Caco-2 (cell line): ENCODE measurements at regions of chr6 and their contacts with region 1.

Region 1: GRCh38 chr6:34986845-34987246 is 97.8 kb downstream of the ANKS1A start:
- DNase-seq: peak; percentile 56 to 72
- H3K4me3 ChIP-seq: no peak overlapping the region
- H3K4me3 Mint-ChIP-seq: no peak overlapping the region
- H3K27ac Mint-ChIP-seq: no peak overlapping the region
- H3K4me1 ChIP-seq: 0 out of 2 replicates have a peak, but pooled peaks cover 5% of the 10 kb centered on the region
- H3K4me1 Mint-ChIP-seq: peaks cover 6% of the 10 kb centered on the region
- H3K27me3 ChIP-seq: no peaks in the 10 kb centered on the region
- H3K27me3 Mint-ChIP-seq: no peaks in the 10 kb centered on the region
- CTCF ChIP-seq: peak; percentile 72 to 81

Region 2: GRCh38 chr6:34953061-34954025 is 33.5 kb before region 1 on chr6:
- CTCF ChIA-PET with region 1: no interaction called
- POLR2A ChIA-PET with region 1: no interaction called
- intact Hi-C with region 1: loop called (anchors 1 kb)
- DNase-seq: peak; percentile 43 to 67
- H3K4me3 ChIP-seq: no peak overlapping the region
- H3K4me3 Mint-ChIP-seq: no peak overlapping the region
- H3K27ac Mint-ChIP-seq: peak overlapping the region; percentile 93
- H3K4me1 ChIP-seq: peaks cover 36% of the 10 kb centered on the region
- H3K4me1 Mint-ChIP-seq: peaks cover 28% of the 10 kb centered on the region
- H3K27me3 ChIP-seq: no peaks in the 10 kb centered on the region
- H3K27me3 Mint-ChIP-seq: no peaks in the 10 kb centered on the region
- CTCF ChIP-seq: no peak

Region 3: DNA sequence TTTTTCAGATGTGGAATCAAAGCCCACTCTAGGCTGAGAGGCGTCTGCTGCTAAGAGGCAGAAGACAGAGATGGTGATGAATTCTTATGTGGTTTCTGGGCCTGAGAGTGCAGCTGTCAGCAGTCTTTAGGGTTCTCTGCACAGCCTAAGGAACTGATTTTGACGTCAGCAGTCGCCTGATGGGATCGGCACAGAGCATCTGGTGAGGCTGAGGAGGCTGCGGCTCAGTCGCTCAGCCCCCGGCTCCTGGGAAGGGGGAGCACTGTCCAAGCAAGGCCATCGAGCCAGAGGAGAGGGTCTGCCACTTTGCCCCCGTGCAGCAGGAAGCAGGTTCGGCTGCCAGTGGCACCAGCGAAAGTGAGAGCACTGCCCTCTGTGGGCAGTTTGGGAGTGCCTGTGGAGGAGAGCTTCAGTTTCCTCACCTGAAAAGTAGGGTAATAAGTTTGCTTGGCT is 61.8 kb after region 1 on chr6:
- CTCF ChIA-PET with region 1: interaction called, 5 read pairs
- POLR2A ChIA-PET with region 1: no interaction called
- intact Hi-C with region 1: loop called (anchors 5 kb)
- DNase-seq: no peak
- H3K4me3 ChIP-seq: no peak overlapping the region
- H3K4me3 Mint-ChIP-seq: no peak overlapping the region
- H3K27ac Mint-ChIP-seq: no peak overlapping the region
- H3K4me1 ChIP-seq: peaks cover 11% of the 10 kb centered on the region
- H3K4me1 Mint-ChIP-seq: peaks cover 12% of the 10 kb centered on the region
- H3K27me3 ChIP-seq: no peaks in the 10 kb centered on the region
- H3K27me3 Mint-ChIP-seq: no peaks in the 10 kb centered on the region
- CTCF ChIP-seq: peak; percentile 2 to 11

Region 4: GRCh38 chr6:35139908-35140655 is 153.2 kb after region 1 on chr6:
- CTCF ChIA-PET with region 1: interaction called, 22 read pairs
- POLR2A ChIA-PET with region 1: no interaction called
- intact Hi-C with region 1: loop called (anchors 1 kb)
- DNase-seq: peak in 1 of 2 experiments; percentile 49
- H3K4me3 ChIP-seq: no peak overlapping the region
- H3K4me3 Mint-ChIP-seq: no peak overlapping the region
- H3K27ac Mint-ChIP-seq: no peak overlapping the region
- H3K4me1 ChIP-seq: no peaks in the 10 kb centered on the region
- H3K4me1 Mint-ChIP-seq: peaks cover 12% of the 10 kb centered on the region
- H3K27me3 ChIP-seq: no peaks in the 10 kb centered on the region
- H3K27me3 Mint-ChIP-seq: no peaks in the 10 kb centered on the region
- CTCF ChIP-seq: peak; percentile 73 to 82

Region 5: DNA sequence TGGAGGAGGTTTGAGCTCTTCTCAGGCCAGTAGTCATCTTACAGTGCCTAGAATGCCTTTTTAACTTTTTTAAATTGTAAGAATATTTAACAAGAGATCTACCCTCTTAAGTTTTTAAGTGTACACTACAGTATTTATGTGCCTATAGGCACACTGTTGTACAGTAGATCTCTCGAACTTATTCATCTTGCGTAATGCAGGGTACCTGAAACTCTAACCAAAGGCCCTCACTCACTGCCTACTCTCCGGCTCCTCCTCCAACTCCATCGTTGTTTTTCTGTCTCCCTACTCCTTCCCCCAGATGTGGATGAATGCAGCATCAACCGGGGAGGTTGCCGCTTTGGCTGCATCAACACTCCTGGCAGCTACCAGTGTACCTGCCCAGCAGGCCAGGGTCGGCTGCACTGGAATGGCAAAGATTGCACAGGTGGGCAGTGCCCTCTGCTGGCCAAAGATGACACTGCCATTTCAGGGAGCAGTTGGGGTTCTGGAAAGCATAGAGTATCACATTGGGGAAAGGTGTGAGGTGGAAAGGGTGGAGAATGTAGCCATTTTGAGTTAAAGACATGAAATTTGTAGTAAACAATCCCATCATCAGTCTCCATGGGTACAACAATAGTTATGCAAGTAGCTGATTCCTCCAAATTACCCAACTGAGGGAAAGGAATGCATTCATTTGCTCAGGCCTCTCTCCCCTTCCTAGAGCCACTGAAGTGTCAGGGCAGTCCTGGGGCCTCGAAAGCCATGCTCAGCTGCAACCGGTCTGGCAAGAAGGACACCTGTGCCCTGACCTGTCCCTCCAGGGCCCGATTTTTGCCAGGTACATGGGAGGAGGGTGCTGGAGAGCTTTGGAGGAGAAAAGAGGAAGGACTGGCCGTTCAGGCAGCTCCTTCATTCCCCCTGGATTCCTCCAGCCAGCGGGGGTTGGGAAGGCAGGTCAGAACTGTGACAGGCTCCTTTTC is 254.3 kb after region 1 on chr6:
- CTCF ChIA-PET with region 1: interaction called, 5 read pairs
- POLR2A ChIA-PET with region 1: no interaction called
- intact Hi-C with region 1: loop called (anchors 2 kb)
- DNase-seq: peak; percentile 74 to 88
- H3K4me3 ChIP-seq: no peak overlapping the region
- H3K4me3 Mint-ChIP-seq: no peak overlapping the region
- H3K27ac Mint-ChIP-seq: no peak overlapping the region
- H3K4me1 ChIP-seq: no peaks in the 10 kb centered on the region
- H3K4me1 Mint-ChIP-seq: peaks cover 13% of the 10 kb centered on the region
- H3K27me3 ChIP-seq: no peaks in the 10 kb centered on the region
- H3K27me3 Mint-ChIP-seq: no peaks in the 10 kb centered on the region
- CTCF ChIP-seq: peak; percentile 92 to 96